PC-9 (cell line): ENCODE measurements at regions of chr9 and their contacts with region 1.

Region 1: GRCh38 chr9:122912964-122913673 is at the start of gene ZBTB6:
- DNase-seq: peak; percentile 77 to 78
- H3K4me3 ChIP-seq: peak within 1 kb of the TSS; percentile 74
- H3K27ac ChIP-seq: peak within 1 kb of the TSS; percentile 76
- H3K4me1 ChIP-seq: peaks cover 11% of the 10 kb centered on the region
- H3K27me3 ChIP-seq: no peaks in the 10 kb centered on the region
- CTCF ChIP-seq: no peak
- total RNA-seq, gene ZBTB6: 7.7 and 8.7 TPM in 2 replicates

Region 2: GRCh38 chr9:122835313-122835731 is 77.8 kb before region 1 on chr9:
- CTCF ChIA-PET with region 1: no interaction called
- POLR2A ChIA-PET with region 1: no interaction called
- intact Hi-C with region 1: no loop called
- DNase-seq: no peak
- H3K4me3 ChIP-seq: no peak overlapping the region
- H3K27ac ChIP-seq: no peak overlapping the region
- H3K4me1 ChIP-seq: no peaks in the 10 kb centered on the region
- H3K27me3 ChIP-seq: no peaks in the 10 kb centered on the region
- CTCF ChIP-seq: no peak

Region 3: GRCh38 chr9:123131993-123132392 is 218.9 kb after region 1 on chr9:
- CTCF ChIA-PET with region 1: no interaction called
- POLR2A ChIA-PET with region 1: interaction called, 17 read pairs
- intact Hi-C with region 1: no loop called
- DNase-seq: no peak
- H3K4me3 ChIP-seq: no peak overlapping the region
- H3K27ac ChIP-seq: no peak overlapping the region
- H3K4me1 ChIP-seq: no peaks in the 10 kb centered on the region
- H3K27me3 ChIP-seq: no peaks in the 10 kb centered on the region
- CTCF ChIP-seq: no peak

Region 4: GRCh38 chr9:123368023-123368422 is 454.9 kb after region 1 on chr9:
- CTCF ChIA-PET with region 1: no interaction called
- POLR2A ChIA-PET with region 1: interaction called, 19 read pairs
- intact Hi-C with region 1: no loop called
- DNase-seq: peak in 1 of 2 experiments; percentile 57
- H3K4me3 ChIP-seq: no peak overlapping the region
- H3K27ac ChIP-seq: no peak overlapping the region
- H3K4me1 ChIP-seq: no peaks in the 10 kb centered on the region
- H3K27me3 ChIP-seq: peaks cover 38% of the 10 kb centered on the region
- CTCF ChIP-seq: no peak